ENCODE measurements at regions of chr14 and their contacts with region 1.

Region 1: DNA sequence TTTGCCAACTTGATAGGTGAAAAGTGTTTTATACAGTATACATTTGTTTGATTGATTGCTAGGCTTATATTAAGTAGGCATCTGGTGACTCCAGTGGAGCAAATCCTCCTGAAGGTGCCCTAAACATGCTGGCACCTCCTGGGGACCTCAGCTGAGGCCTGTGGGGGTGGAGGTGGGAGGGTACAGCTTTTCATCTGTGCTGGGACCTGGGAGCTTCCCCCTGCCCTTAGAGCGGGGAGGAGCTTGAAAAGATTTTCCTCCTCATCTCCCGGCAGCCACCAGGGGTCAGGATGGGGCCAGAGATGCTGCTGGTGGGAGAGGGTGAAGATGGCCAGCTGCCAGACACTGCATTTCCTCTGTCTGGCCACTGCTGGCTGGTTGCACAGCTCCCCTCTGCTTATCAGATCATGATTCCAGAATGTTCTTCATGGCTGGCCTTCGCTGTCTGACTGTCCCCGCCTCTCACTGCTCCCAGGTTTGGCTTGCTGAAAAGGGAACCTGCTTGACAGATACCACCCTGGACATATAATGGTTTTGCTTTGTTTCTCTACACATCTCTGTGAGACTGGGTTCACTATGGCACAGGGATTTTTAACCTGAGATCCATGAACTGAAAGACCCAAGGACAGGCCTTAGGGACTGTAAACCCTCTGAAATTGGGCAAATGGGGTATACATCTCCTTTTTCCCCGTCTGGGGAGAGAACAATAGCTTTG is 10.5 kb upstream of the JPH4 start:
- DNase-seq: peak; percentile 85
- H3K4me3 Mint-ChIP-seq: no peak overlapping the region
- H3K27ac Mint-ChIP-seq: no peak overlapping the region
- H3K4me1 Mint-ChIP-seq: no peaks in the 10 kb centered on the region
- H3K27me3 Mint-ChIP-seq: peaks cover 29% of the 10 kb centered on the region

Region 2: GRCh38 chr14:23539248-23540140 is 49.5 kb before region 1 on chr14:
- CTCF ChIA-PET with region 1: no interaction called
- DNase-seq: peak; percentile 38
- H3K4me3 Mint-ChIP-seq: no peak overlapping the region
- H3K27ac Mint-ChIP-seq: no peak overlapping the region
- H3K4me1 Mint-ChIP-seq: no peaks in the 10 kb centered on the region
- H3K27me3 Mint-ChIP-seq: peaks cover 24% of the 10 kb centered on the region

Region 3: DNA sequence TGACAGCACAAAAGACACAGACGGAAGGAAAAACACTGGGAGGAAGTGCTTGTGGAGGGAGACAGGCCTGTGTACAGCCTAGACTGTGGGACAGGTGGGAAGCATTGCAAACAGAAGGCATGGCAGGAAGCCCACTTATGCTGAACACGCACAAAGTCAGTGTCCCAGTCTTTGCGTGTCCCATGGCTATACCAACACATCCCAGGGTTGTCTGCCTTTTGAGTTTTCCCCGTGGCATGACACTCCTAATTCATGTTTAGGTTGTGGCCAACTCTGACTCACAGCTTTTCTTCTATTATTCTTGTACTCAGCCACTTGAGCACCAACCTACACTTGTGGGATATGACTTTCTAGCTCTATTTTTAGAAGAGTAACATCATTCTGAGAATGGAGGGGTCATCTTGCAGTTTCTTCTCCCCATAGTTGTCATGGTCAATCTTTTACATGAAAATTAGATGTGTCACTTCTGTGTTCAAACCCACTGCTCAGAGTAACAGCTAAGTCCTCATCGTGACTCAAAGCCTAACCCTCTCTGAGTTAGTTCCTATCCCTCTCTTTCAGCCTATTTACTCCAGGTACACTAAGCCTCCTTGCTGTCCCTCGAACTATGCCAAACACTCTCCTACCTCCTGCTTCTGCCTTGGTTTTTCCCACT is 17.0 kb after region 1 on chr14:
- CTCF ChIA-PET with region 1: interaction called, 10 read pairs
- DNase-seq: no peak
- H3K4me3 Mint-ChIP-seq: no peak overlapping the region
- H3K27ac Mint-ChIP-seq: no peak overlapping the region
- H3K4me1 Mint-ChIP-seq: peaks cover 19% of the 10 kb centered on the region
- H3K27me3 Mint-ChIP-seq: peaks cover 7% of the 10 kb centered on the region

Region 4: DNA sequence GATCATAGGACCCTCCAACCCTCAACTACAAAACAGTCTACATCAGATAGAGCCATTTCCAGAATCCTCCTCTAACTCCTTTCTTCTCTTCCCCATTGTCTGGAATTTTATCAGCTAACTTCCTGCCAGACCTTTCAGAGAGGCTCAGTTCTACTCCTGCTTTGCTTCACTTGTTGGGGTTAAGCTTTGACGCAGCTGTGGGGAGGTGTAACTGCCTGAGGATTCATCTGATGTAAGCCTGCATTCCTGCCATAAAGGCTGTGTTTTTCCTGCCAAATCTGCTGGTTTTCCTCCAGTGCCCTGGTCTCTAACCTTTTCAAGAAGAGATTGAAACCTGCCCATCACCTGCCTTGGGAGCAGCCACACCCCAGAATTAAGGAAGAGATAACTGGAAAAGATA is 64.0 kb after region 1 on chr14:
- CTCF ChIA-PET with region 1: interaction called, 10 read pairs
- DNase-seq: no peak
- H3K4me3 Mint-ChIP-seq: no peak overlapping the region
- H3K27ac Mint-ChIP-seq: no peak overlapping the region
- H3K4me1 Mint-ChIP-seq: no peaks in the 10 kb centered on the region
- H3K27me3 Mint-ChIP-seq: peaks cover 3% of the 10 kb centered on the region

Region 5: GRCh38 chr14:23665375-23666192 is 76.5 kb after region 1 on chr14:
- CTCF ChIA-PET with region 1: interaction called, 10 read pairs
- DNase-seq: peak; percentile 45
- H3K4me3 Mint-ChIP-seq: no peak overlapping the region
- H3K27ac Mint-ChIP-seq: no peak overlapping the region
- H3K4me1 Mint-ChIP-seq: no peaks in the 10 kb centered on the region
- H3K27me3 Mint-ChIP-seq: peaks cover 7% of the 10 kb centered on the region

Region 6: DNA sequence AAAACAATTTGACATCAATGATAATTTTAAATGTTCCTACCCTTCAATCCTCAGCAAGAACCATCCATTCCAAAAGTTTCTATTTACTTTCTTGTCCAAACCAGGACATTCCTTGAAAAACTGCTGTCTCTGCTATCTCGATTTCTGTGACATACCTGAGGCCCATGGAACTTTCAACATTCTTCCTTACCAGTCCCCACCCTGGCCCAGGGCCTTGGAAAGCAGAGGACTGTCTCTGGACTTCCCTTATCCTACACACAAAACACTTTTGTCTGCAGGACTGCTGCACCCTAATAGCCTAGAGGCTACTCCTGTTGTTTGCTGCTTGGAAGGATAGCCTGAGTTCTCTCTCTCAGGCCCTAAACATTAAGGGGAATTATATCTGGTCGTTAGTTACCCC is 212.7 kb after region 1 on chr14:
- CTCF ChIA-PET with region 1: no interaction called
- DNase-seq: no peak
- H3K4me3 Mint-ChIP-seq: no peak overlapping the region
- H3K27ac Mint-ChIP-seq: no peak overlapping the region
- H3K4me1 Mint-ChIP-seq: no peaks in the 10 kb centered on the region
- H3K27me3 Mint-ChIP-seq: peaks cover 14% of the 10 kb centered on the region

Region 7: GRCh38 chr14:23910101-23910875 is 321.2 kb after region 1 on chr14:
- CTCF ChIA-PET with region 1: interaction called, 26 read pairs
- DNase-seq: peak; percentile 26
- H3K4me3 Mint-ChIP-seq: no peak overlapping the region
- H3K27ac Mint-ChIP-seq: no peak overlapping the region
- H3K4me1 Mint-ChIP-seq: no peaks in the 10 kb centered on the region
- H3K27me3 Mint-ChIP-seq: peaks cover 32% of the 10 kb centered on the region

Region 8: GRCh38 chr14:23929822-23930294 is 340.8 kb after region 1 on chr14:
- CTCF ChIA-PET with region 1: interaction called, 32 read pairs
- DNase-seq: peak; percentile 89
- H3K4me3 Mint-ChIP-seq: no peak overlapping the region
- H3K27ac Mint-ChIP-seq: no peak overlapping the region
- H3K4me1 Mint-ChIP-seq: no peaks in the 10 kb centered on the region
- H3K27me3 Mint-ChIP-seq: peaks cover 29% of the 10 kb centered on the region